Thyroid gland (tissue), 4 donors: ENCODE measurements at regions of chr10 and their contacts with region 1.

Region 1: DNA sequence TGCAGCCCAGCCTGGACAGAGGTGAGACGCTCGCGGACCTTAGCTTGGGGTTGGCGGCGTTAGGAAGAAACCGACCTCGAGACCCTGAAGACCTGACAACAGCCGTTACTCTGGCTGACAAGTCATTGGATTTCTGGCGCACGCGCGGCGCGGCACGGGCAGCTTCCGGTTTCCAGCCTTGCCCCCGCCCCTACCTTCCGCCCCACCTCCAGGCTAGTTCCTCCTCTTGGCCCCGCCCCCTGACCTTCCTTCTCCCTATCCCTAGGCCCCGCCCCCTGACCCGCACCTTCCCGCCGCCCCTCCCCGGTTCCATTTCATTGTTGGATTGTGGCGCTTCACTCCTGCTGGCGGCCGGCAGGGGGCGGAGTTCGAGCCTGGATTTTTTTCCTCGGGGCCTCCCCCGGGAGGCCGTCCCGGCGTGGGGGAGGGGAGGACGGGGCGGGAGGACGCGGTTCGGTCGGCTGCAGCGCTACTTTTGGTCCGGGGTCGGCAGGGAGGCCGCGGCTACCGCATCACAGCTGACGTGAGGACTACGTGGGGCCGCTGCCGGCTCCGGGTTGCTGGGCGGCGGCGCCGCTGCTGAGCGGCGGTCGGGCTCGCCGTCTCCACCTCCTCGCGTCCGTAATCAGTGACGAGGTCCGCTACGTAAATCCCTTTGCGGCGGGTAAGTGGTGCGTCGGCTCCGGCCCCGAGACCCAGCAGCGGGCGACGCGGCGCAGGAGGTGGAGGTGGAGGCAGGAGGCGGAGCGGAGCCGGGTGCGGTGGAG is at the start of gene CREM:
- DNase-seq: peak; percentile 100
- H3K4me3 ChIP-seq: peak within 1 kb of the TSS; percentile 64 to 96 (median 80)
- H3K27ac ChIP-seq: peak within 1 kb of the TSS; percentile 98 to 99 (median 99)
- H3K4me1 ChIP-seq: peaks cover 19 to 39% of the 10 kb centered on the region in 2 donors
- H3K27me3 ChIP-seq: no peaks in the 10 kb centered on the region
- CTCF ChIP-seq: peak; percentile 77 to 94 (median 86)
- POLR2A ChIP-seq: peak; percentile 96 to 100
- total RNA-seq, gene CREM: 39.9 to 64.4 (median 50.5) TPM

Region 2: DNA sequence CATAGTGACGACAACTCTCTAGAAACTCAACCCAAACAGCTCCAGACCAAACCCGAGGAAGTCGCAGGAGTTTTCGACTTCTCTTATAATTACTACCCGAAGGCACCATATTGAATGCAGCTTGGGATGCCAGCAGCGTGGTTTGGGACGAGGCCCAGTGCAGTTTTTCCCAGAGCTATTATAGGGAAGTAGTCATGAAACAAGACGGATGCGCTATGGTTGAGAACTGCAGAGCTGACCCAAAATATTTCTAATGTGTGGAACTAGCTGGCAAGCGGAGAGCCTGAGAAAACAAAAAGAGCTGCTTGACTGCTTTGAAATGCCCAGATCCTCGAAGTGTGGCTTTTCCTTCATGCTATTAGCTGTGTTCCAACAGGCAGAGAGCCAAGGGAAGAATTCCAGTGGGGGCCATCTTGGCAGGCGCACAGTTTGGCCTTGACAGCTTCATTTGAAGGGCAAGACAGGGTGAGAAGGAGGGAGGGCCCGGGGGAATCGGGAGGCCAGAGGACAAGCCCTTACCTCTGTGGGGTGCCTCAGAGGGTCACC is 159.3 kb before region 1 on chr10:
- intact Hi-C with region 1: no loop called
- DNase-seq: peak; percentile 95 to 97
- H3K4me3 ChIP-seq: no peak overlapping the region
- H3K27ac ChIP-seq: peak overlapping the region; percentile 63 to 91 (median 77)
- H3K4me1 ChIP-seq: peaks cover 58 to 72% of the 10 kb centered on the region in 2 donors
- H3K27me3 ChIP-seq: no peaks in the 10 kb centered on the region
- CTCF ChIP-seq: no peak
- POLR2A ChIP-seq: no peak

Region 3: DNA sequence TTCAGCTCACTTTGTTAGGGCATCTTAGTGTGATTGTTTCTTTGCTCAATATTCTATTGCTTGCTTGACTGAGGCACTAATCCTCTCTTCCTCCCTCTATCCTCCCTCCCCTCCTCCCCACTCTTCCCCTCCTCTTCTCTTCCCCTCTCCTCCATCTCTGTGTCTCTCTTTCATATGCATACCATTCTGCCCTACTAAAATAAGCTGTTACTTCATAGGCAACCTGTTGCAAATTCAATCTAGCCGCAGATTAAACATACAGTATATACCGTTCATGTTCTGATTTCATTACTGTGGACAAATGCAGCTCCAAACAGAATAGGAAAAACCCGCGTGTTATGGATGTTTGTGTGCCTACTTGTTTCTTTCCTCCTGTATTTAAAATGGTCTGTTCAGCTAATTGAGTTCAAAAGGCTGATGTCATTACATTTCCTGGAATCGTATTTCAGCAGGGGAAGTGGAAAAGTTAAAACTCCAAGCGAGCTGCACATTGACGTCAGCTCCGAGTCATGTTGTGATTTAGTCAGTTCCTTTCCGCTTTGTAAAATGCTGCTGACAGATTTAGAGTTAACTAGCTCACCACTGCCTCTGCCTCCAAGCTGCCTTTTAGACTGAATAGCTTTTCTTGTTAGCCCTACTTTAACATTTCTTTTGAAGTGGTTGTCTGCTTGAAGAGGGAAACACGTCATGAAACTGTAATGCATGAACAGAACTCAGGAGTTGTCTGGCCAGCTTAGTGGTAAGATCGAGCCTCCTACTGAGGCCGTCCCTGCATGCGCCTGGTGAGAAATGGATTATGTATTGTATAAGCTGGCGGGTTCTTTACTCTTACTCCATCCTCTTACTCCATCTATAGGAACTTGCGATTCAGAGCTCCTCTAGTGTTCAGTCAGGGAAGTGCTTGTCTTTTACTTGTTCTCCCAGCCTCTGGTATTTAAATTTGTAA is 68.9 kb after region 1 on chr10:
- intact Hi-C with region 1: loop called (anchors 5 kb)
- DNase-seq: peak; percentile 70 to 72
- H3K4me3 ChIP-seq: peak overlapping the region in 2 of 3 donors; percentile 2 to 26
- H3K27ac ChIP-seq: peak overlapping the region; percentile 68 to 96 (median 93)
- H3K4me1 ChIP-seq: peaks cover 0 to 9% of the 10 kb centered on the region in 2 donors
- H3K27me3 ChIP-seq: no peaks in the 10 kb centered on the region
- CTCF ChIP-seq: peak; percentile 70 to 92 (median 85)
- POLR2A ChIP-seq: peak in 1 of 2 donors; percentile 66

Region 4: GRCh38 chr10:35206274-35206673 is 79.6 kb after region 1 on chr10:
- intact Hi-C with region 1: no loop called
- DNase-seq: no peak
- H3K4me3 ChIP-seq: no peak overlapping the region
- H3K27ac ChIP-seq: no peak overlapping the region
- H3K4me1 ChIP-seq: no peaks in the 10 kb centered on the region
- H3K27me3 ChIP-seq: no peaks in the 10 kb centered on the region
- CTCF ChIP-seq: no peak
- POLR2A ChIP-seq: no peak

Region 5: GRCh38 chr10:35218339-35218955 is 91.7 kb after region 1 on chr10:
- intact Hi-C with region 1: loop called (anchors 5 kb)
- DNase-seq: peak; percentile 83 to 88
- H3K4me3 ChIP-seq: no peak overlapping the region
- H3K27ac ChIP-seq: no peak overlapping the region
- H3K4me1 ChIP-seq: peaks cover 4 to 23% of the 10 kb centered on the region in 2 donors
- H3K27me3 ChIP-seq: no peaks in the 10 kb centered on the region
- CTCF ChIP-seq: peak; percentile 65 to 90 (median 78)
- POLR2A ChIP-seq: no peak

Region 6: DNA sequence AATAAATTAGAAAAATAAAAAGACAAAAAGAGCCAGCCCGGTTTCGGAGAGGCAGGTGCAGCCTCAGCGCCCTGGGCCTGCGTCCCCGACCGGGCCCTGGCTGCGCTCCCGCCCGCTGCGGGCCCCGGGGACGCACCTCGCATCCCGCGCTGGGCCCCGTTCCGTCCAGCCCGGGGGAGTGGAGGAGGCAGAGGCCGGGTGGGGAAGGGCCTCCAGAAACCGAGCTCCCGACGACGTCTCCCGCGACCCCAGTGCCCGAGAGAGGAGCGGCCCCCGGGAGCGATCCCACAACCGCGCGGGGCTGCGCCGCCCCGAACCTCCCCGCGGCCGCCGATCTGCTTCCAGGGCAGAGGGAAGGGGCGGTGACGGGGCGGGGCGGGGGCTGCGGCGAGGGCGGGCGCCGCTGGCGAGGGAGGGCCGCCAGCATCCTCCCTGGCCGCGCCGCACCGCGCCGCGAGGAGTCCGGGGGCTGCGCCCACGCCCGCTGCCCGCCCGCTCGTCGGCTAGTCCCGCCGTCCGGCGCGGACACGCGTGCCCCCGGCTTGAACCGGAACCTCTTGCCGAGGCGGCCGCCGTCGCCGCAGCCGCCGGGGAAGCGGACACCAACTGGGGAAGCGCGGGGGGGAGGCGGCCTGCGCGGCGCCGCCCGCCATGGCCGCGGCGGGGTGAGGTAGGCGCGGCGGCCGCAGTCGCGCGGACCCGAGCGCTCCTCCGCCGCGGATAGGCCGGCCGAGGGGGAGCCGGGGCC is 209.5 kb after region 1 on chr10 and contains the start of gene CCNY:
- intact Hi-C with region 1: loop called (anchors 10 kb)
- DNase-seq: peak; percentile 77 to 80
- H3K4me3 ChIP-seq: peak within 1 kb of the TSS; percentile 79 to 97 (median 93)
- H3K27ac ChIP-seq: peak within 1 kb of the TSS; percentile 78 to 89 (median 82)
- H3K4me1 ChIP-seq: peaks cover 50 to 57% of the 10 kb centered on the region in 2 donors
- H3K27me3 ChIP-seq: no peaks in the 10 kb centered on the region
- CTCF ChIP-seq: no peak
- POLR2A ChIP-seq: peak in 1 of 2 donors; percentile 74
- total RNA-seq, gene CCNY: 37.5 to 56.3 (median 43.9) TPM

Region 7: GRCh38 chr10:35574924-35575352 is 448.2 kb after region 1 on chr10:
- intact Hi-C with region 1: no loop called
- DNase-seq: no peak
- H3K4me3 ChIP-seq: no peak overlapping the region
- H3K27ac ChIP-seq: no peak overlapping the region
- H3K4me1 ChIP-seq: peaks cover 0 to 7% of the 10 kb centered on the region in 2 donors
- H3K27me3 ChIP-seq: no peaks in the 10 kb centered on the region
- CTCF ChIP-seq: no peak
- POLR2A ChIP-seq: no peak